Activated CD8-positive, alpha-beta T cell treated with anti-CD3 and anti-CD28 coated beads for 36 hours (primary cell): ENCODE measurements at regions of chr12 and their contacts with region 1.

Region 1: GRCh38 chr12:1650260-1650977 is 21.4 kb downstream of the WNT5B start:
- DNase-seq: no peak
- ATAC-seq: no peak
- H3K4me3 Mint-ChIP-seq: no peak overlapping the region
- H3K27ac Mint-ChIP-seq: no peak overlapping the region
- H3K4me1 Mint-ChIP-seq: no peaks in the 10 kb centered on the region
- H3K27me3 Mint-ChIP-seq: peaks cover 8% of the 10 kb centered on the region
- CTCF ChIP-seq: no peak

Region 2: DNA sequence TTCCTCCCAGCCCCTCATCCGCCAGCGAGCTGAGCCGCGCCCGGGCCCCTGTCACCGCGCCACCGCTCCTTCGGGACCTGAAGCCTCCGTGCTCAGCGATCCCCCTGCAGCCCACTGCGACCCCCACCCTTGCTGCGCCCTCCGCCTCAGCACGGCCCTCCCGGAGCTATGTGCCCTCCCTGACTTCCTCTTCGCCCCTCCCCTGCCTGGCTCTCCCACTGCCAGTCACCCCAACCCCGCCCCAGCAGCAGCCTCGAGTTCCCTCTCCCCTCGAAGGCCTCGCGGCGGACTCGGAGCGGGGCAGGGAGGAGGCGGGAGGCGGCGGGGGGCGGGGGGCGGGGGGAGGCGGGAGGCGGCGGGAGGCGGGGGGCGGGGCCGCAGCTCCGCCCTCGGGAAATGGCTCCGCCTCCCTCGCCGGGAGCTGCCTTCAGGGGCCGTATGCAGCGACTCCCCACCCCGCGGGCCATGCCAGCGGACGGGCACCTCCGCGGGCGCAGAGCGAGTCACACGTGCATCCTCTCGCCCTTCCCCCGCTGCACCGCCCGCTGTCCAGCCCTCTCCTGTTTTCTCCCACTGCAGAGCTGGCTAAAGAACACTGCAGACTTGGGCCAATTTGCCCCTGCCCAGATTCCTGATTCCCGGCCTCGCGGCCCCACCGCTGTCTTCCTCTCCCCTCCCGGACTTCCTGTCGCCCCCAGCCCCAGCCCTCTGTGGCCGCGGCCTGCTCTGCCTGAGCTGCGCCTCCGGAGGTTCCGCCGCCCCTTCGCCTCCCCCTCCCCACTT is 11.3 kb after region 1 on chr12:
- CTCF ChIA-PET with region 1: interaction called, 10 read pairs
- POLR2A ChIA-PET with region 1: interaction called, 4 read pairs
- intact Hi-C with region 1: no loop called
- DNase-seq: peak; percentile 91
- ATAC-seq: peak; percentile 93
- H3K4me3 Mint-ChIP-seq: peak overlapping the region; percentile 73
- H3K27ac Mint-ChIP-seq: peak overlapping the region; percentile 83
- H3K4me1 Mint-ChIP-seq: peaks cover 36% of the 10 kb centered on the region
- H3K27me3 Mint-ChIP-seq: no peaks in the 10 kb centered on the region
- CTCF ChIP-seq: no peak

Region 3: DNA sequence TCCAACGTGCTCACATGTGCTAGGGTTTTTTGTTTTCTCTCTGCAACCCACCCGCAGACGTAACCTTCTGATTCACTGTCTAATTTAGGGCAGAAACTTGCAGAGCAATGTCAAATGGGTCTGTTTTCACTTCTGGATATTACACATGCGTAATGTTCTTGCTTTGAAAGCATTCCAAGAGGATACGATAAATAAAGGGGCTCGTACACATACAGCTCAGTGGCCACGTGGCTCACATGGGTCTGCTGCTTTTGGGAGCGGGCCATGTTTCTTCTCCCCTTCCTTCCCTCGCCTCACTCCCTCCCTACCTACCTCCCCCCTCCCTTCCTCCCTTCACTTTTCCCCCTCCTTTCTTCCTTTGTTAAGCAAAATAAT is 425.8 kb after region 1 on chr12:
- CTCF ChIA-PET with region 1: no interaction called
- POLR2A ChIA-PET with region 1: no interaction called
- intact Hi-C with region 1: no loop called
- DNase-seq: no peak
- ATAC-seq: no peak
- H3K4me3 Mint-ChIP-seq: no peak overlapping the region
- H3K27ac Mint-ChIP-seq: no peak overlapping the region
- H3K4me1 Mint-ChIP-seq: no peaks in the 10 kb centered on the region
- H3K27me3 Mint-ChIP-seq: no peaks in the 10 kb centered on the region
- CTCF ChIP-seq: no peak